PC-9 (cell line): ENCODE measurements at regions of chr2 and their contacts with region 1.

Region 1: GRCh38 chr2:240640939-240641338 is 15.7 kb downstream of the GPR35 start:
- DNase-seq: peak in 1 of 2 experiments; percentile 66
- H3K4me3 ChIP-seq: no peak overlapping the region
- H3K27ac ChIP-seq: no peak overlapping the region
- H3K4me1 ChIP-seq: no peaks in the 10 kb centered on the region
- H3K27me3 ChIP-seq: peaks cover 78% of the 10 kb centered on the region
- CTCF ChIP-seq: peak; percentile 62

Region 2: DNA sequence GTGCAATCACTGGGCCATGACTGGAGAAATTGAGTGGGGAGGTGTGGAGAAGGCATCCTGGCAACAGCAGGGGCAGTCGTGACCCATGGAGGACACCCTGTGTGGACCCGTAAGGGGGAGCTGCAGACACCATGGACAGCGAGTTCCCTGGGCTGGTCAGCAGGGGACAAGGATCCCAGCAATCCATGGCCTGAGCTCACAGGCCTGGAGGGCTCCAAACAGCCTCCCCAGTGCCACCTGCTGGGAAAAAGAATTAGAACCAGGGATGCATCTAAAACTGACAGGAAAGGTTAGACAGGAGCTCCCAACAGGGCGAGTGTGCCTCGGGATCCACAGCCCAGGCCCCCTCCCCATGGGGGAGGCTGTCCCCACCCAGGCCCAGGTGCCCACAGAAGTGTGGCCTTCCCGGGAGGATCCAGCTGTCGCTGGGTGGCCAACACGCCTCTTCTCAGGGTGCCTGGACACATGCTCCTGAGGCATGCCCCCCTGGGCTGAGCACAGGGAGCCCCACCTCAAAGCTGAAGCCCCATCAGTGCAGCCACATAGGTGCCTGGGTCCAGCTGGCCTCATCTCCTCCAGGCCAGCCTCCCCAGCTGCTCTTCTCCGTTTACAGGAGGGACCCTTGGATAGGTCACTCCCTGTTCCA is 199.6 kb after region 1 on chr2:
- CTCF ChIA-PET with region 1: no interaction called
- POLR2A ChIA-PET with region 1: no interaction called
- intact Hi-C with region 1: loop called (anchors 2 kb)
- DNase-seq: peak; percentile 71 to 88
- H3K4me3 ChIP-seq: no peak overlapping the region
- H3K27ac ChIP-seq: no peak overlapping the region
- H3K4me1 ChIP-seq: no peaks in the 10 kb centered on the region
- H3K27me3 ChIP-seq: peaks cover 87% of the 10 kb centered on the region
- CTCF ChIP-seq: peak; percentile 80